Sigmoid colon (tissue), 7 donors: ENCODE measurements at regions of chr3 and their contacts with region 1.

Region 1: GRCh38 chr3:197516517-197516889 is 39.3 kb downstream of the BDH1 start:
- DNase-seq: no peak
- H3K4me3 ChIP-seq: no peak overlapping the region
- H3K27ac ChIP-seq: no peak overlapping the region
- H3K4me1 ChIP-seq: no peaks in the 10 kb centered on the region
- H3K27me3 ChIP-seq: no peaks in the 10 kb centered on the region
- CTCF ChIP-seq: no peak
- EP300 ChIP-seq: no peak
- POLR2A ChIP-seq: no peak

Region 2: DNA sequence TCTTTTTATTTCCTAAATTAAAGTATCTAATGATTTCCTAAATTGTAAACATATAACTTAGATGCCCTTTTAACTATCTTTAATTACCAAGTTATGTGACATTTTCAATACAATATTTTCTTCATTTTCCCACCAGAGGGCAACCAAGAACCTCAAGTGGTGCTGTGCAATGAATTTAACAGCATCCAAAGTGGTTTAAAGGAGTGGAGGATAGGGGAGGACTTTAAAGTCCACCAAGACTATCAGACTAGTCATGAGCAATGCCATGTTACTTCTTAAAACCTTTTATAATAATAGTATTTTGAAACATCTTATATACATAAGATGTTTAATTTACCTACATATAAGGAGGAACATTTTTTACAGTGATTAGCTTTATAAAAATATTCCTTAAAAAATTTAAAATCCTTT is 292.5 kb before region 1 on chr3:
- intact Hi-C with region 1: loop called (anchors 10 kb)
- DNase-seq: no peak
- H3K4me3 ChIP-seq: no peak overlapping the region
- H3K27ac ChIP-seq: no peak overlapping the region
- H3K4me1 ChIP-seq: peaks cover 0 to 59% (median 28%) of the 10 kb centered on the region in 4 donors
- H3K27me3 ChIP-seq: no peaks in the 10 kb centered on the region
- CTCF ChIP-seq: peak; percentile 8 to 49 (median 43)
- EP300 ChIP-seq: no peak
- POLR2A ChIP-seq: no peak

Region 3: DNA sequence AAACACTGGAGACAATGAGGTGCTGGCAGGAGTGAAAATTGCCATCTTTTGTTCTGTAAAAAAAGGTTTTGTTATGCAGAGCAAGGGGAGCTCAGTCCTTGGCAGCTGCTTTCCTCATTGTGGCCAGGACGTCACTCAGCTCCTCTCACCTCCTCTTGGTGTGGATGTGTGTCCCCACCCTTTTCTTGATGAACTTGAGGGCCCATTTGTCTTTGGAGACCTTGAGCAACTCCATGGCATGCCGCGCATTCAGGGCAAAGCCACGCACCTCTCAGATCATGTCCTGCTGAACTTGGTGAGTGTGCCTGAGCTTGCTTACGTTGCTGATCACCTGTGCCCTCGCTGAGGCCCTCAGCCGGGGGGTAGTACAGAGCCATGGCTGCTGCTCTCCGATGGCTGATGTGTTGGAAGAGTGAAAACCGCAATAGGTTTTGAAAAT is 63.8 kb after region 1 on chr3:
- intact Hi-C with region 1: no loop called
- DNase-seq: no peak
- H3K4me3 ChIP-seq: no peak overlapping the region
- H3K27ac ChIP-seq: no peak overlapping the region
- H3K4me1 ChIP-seq: no peaks in the 10 kb centered on the region
- H3K27me3 ChIP-seq: no peaks in the 10 kb centered on the region
- CTCF ChIP-seq: no peak
- EP300 ChIP-seq: no peak
- POLR2A ChIP-seq: no peak